B cell (primary cell): ENCODE measurements at regions of chr11 and their contacts with region 1.

Region 1: DNA sequence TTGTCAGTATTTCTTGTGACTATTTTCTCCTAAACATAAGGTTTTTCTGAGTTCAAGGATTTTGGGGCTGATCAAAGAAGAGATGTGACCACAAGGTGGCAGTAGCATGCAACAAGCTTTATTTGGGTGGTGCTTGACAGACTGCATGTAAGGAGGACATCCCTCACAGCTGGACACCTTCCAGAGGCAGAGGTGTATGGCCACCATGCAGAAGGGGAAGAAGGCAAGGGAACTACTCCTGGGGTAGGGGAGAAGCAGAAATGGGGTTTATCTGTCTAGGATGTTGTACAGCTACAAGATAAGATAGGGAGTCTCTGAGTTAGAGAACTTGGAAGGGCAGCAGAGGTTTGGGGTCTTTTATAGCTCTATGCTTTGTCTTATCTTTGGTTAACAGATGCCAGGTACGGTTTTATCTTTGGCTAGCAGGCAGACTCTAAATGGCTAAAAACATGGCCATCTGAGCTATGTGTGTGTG is 5.1 kb upstream of the BIRC2 start:
- DNase-seq: peak; percentile 84
- ATAC-seq: peak; percentile 48
- H3K4me3 ChIP-seq: no peak overlapping the region
- H3K4me3 Mint-ChIP-seq: no peak overlapping the region
- H3K27ac ChIP-seq: peak overlapping the region; percentile 19 to 75
- H3K27ac Mint-ChIP-seq: peak overlapping the region; percentile 43
- H3K4me1 ChIP-seq: peaks cover 14 to 16% of the 10 kb centered on the region in 2 donors
- H3K4me1 Mint-ChIP-seq: peaks cover 42% of the 10 kb centered on the region
- H3K27me3 ChIP-seq: no peaks in the 10 kb centered on the region
- H3K27me3 Mint-ChIP-seq: no peaks in the 10 kb centered on the region
- CTCF ChIP-seq: peak; percentile 80

Region 2: DNA sequence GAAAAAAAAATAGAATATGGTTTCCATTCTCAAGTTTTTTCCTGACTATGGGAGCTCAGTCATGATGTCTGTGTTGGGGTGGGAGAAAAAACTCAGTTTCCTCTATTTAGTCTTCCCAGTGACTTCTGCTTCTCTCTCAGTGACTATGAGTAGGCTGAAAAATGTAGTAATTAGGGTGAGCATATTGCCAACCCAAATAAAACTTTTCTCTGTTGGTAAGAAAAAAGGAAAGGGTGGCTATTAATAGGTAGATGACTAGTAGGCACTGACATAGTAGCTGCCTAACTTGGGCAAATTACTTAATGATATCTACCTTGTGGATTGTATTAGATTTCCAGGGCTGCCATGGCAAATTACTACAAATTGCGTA is 58.8 kb before region 1 on chr11:
- CTCF ChIA-PET with region 1: interaction called, 295 read pairs
- POLR2A ChIA-PET with region 1: interaction called, 4 read pairs
- intact Hi-C with region 1: loop called (anchors 1 kb)
- DNase-seq: no peak
- ATAC-seq: no peak
- H3K4me3 ChIP-seq: no peak overlapping the region
- H3K4me3 Mint-ChIP-seq: no peak overlapping the region
- H3K27ac ChIP-seq: no peak overlapping the region
- H3K27ac Mint-ChIP-seq: no peak overlapping the region
- H3K4me1 ChIP-seq: peaks cover 11 to 12% of the 10 kb centered on the region in 2 donors
- H3K4me1 Mint-ChIP-seq: peaks cover 13% of the 10 kb centered on the region
- H3K27me3 ChIP-seq: peaks cover 0 to 4% (median 2%) of the 10 kb centered on the region in 4 experiments
- H3K27me3 Mint-ChIP-seq: peaks cover 12% of the 10 kb centered on the region
- CTCF ChIP-seq: no peak

Region 3: DNA sequence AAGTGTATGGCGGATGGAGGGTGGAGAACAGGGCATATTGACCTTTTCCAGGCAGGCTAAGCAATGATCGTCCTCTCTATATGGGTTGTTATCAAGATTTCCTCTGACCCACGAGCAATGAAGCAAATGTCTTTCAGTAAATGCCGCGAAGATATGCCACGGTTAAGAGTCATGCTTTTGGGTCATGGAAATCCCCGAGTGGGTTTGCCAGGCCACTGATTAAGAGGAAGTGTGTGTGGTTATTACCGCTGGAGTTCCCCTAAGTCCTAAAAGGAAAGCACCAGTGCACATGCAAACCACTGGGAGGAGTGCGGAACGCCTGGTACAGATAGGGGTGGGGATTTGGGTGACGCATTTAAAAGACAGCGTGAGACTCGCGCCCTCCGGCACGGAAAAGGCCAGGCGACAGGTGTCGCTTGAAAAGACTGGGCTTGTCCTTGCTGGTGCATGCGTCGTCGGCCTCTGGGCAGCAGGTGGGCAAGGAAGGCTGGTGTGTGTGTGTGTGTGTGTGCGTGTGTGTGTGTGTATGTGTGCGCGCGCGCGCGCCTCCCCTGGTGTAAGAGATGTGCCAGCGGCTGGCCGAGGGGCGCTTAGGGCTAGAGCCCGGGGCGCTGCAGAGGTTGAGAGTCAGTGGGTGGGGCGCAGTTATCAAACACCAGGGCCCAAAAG is 24.6 kb before region 1 on chr11 and contains the start of gene BIRC3:
- CTCF ChIA-PET with region 1: interaction called, 68 read pairs
- POLR2A ChIA-PET with region 1: interaction called, 6 read pairs
- intact Hi-C with region 1: loop called (anchors 1 kb)
- DNase-seq: peak; percentile 99
- ATAC-seq: peak; percentile 87
- H3K4me3 ChIP-seq: peak within 1 kb of the TSS; percentile 76 to 100 (median 92)
- H3K4me3 Mint-ChIP-seq: peak within 1 kb of the TSS; percentile 100
- H3K27ac ChIP-seq: peak within 1 kb of the TSS; percentile 96 to 98
- H3K27ac Mint-ChIP-seq: peak within 1 kb of the TSS; percentile 96
- H3K4me1 ChIP-seq: peaks cover 53 to 58% of the 10 kb centered on the region in 2 donors
- H3K4me1 Mint-ChIP-seq: peaks cover 64% of the 10 kb centered on the region
- H3K27me3 ChIP-seq: no peaks in the 10 kb centered on the region
- H3K27me3 Mint-ChIP-seq: no peaks in the 10 kb centered on the region
- CTCF ChIP-seq: no peak
- total RNA-seq, gene BIRC3: 419 and 428 TPM in 2 replicates

Region 4: GRCh38 chr11:102396708-102397563 is 55.1 kb after region 1 on chr11:
- CTCF ChIA-PET with region 1: interaction called, 12 read pairs
- POLR2A ChIA-PET with region 1: no interaction called
- intact Hi-C with region 1: no loop called
- DNase-seq: no peak
- ATAC-seq: no peak
- H3K4me3 ChIP-seq: no peak overlapping the region
- H3K4me3 Mint-ChIP-seq: no peak overlapping the region
- H3K27ac ChIP-seq: no peak overlapping the region
- H3K27ac Mint-ChIP-seq: no peak overlapping the region
- H3K4me1 ChIP-seq: no peaks in the 10 kb centered on the region
- H3K4me1 Mint-ChIP-seq: peaks cover 16% of the 10 kb centered on the region
- H3K27me3 ChIP-seq: no peaks in the 10 kb centered on the region
- H3K27me3 Mint-ChIP-seq: no peaks in the 10 kb centered on the region
- CTCF ChIP-seq: no peak

Region 5: DNA sequence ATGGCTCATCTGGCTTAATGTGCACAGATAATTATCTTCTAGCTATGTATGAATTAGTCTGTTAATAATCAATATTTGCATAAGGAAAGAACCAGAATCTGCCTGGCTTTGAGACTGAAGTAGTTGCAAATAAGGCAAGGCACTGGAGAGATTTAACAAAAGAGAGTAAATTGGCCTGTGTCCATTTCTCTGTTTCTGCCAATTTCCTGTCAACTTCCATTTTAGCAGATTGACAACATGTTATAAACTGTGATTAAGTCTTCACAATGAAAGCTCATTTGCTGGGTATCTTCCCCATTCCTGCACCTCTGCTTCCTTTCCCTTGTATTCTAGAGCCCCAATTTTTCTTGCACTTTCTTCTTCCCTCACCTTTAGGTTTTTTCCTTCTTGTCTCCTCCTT is 116.0 kb after region 1 on chr11:
- CTCF ChIA-PET with region 1: no interaction called
- POLR2A ChIA-PET with region 1: no interaction called
- intact Hi-C with region 1: no loop called
- DNase-seq: no peak
- ATAC-seq: no peak
- H3K4me3 ChIP-seq: no peak overlapping the region
- H3K4me3 Mint-ChIP-seq: no peak overlapping the region
- H3K27ac ChIP-seq: no peak overlapping the region
- H3K27ac Mint-ChIP-seq: no peak overlapping the region
- H3K4me1 ChIP-seq: peaks cover 11 to 19% of the 10 kb centered on the region in 2 donors
- H3K4me1 Mint-ChIP-seq: peaks cover 28% of the 10 kb centered on the region
- H3K27me3 ChIP-seq: no peaks in the 10 kb centered on the region
- H3K27me3 Mint-ChIP-seq: peaks cover 3% of the 10 kb centered on the region
- CTCF ChIP-seq: no peak

Region 6: GRCh38 chr11:102666331-102666957 is 324.6 kb after region 1 on chr11:
- CTCF ChIA-PET with region 1: interaction called, 67 read pairs
- POLR2A ChIA-PET with region 1: no interaction called
- intact Hi-C with region 1: loop called (anchors 1 kb)
- DNase-seq: peak; percentile 55
- ATAC-seq: peak; percentile 36
- H3K4me3 ChIP-seq: no peak overlapping the region
- H3K4me3 Mint-ChIP-seq: no peak overlapping the region
- H3K27ac ChIP-seq: no peak overlapping the region
- H3K27ac Mint-ChIP-seq: no peak overlapping the region
- H3K4me1 ChIP-seq: peaks cover 0 to 5% of the 10 kb centered on the region in 2 donors
- H3K4me1 Mint-ChIP-seq: no peaks in the 10 kb centered on the region
- H3K27me3 ChIP-seq: no peaks in the 10 kb centered on the region
- H3K27me3 Mint-ChIP-seq: peaks cover 3% of the 10 kb centered on the region
- CTCF ChIP-seq: peak; percentile 82